MCF 10A (cell line): ENCODE measurements at regions of chr1 and their contacts with region 1.

Region 1: DNA sequence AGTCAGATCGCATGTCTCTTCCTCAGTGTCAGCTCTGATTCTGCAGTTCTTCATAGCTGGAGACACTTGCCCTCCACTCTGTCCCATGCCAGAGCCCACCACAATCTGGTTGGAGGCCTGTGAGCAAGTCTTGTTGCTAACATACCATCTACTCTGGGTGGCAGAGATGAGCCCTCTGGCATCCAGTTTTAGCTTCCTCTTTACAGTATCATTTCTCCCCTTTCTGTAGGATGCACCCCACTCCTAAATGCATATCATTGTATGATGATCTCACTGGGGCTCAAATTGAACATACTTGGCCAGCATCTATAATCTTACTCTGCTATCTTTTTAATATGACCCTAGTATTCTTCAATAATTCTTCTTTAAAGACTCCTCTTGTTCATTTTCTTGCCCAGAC is 16.9 kb downstream of the PCNX2 start:
- DNase-seq: no peak
- H3K4me3 Mint-ChIP-seq: no peak overlapping the region
- H3K27ac Mint-ChIP-seq: no peak overlapping the region
- H3K4me1 Mint-ChIP-seq: peaks cover 10% of the 10 kb centered on the region
- H3K27me3 Mint-ChIP-seq: no peaks in the 10 kb centered on the region
- CTCF ChIP-seq: no peak

Region 2: DNA sequence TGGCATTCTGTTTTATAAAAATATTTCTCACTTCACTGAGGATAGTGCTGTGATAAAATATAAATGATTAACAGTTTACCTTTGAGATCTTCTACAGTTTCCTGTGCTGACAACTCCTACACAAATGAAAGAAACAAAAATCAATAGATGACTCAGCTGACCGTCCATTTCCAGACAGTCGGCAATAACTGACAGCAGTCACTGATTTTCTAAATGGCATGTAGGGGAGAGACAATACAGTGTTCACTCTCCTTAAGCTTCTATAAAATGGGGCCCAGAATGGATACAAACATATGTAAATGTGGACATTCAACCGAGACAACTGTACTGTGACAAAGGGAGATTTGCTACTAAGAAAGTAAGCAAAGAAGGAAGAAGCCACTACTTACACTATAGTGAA is 17.4 kb before region 1 on chr1:
- CTCF ChIA-PET with region 1: interaction called, 6 read pairs
- POLR2A ChIA-PET with region 1: interaction called, 10 read pairs
- intact Hi-C with region 1: no loop called
- DNase-seq: peak; percentile 38
- H3K4me3 Mint-ChIP-seq: no peak overlapping the region
- H3K27ac Mint-ChIP-seq: peak overlapping the region; percentile 49
- H3K4me1 Mint-ChIP-seq: peaks cover 8% of the 10 kb centered on the region
- H3K27me3 Mint-ChIP-seq: no peaks in the 10 kb centered on the region
- CTCF ChIP-seq: no peak

Region 3: DNA sequence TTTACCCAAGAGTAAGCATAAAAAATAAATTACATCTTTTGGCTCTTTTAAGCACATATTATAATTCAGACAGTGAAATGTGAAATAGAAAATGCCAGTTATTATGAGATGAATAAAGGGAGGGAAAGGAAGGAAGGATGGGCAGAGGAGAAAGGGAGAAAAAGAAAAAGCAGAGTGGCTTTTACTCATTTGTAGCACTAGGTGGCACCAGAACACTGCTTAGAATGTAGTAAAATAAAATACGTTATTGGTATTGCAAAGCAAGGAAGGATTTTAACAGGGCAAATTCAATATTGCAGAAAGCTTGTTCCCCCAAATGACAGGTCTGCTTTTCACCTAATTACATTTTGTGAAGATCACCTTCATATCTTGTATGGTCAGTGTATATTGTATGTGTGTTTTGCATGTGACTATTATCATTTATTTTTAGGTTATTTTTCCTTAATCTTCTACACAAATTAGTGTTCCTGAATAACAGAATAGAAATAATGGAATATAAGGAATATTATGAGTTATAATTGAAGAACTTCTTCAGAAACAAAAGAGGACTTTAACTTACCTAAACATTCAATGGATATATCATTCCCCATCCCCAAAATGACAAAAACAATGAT is 26.0 kb after region 1 on chr1:
- CTCF ChIA-PET with region 1: no interaction called
- POLR2A ChIA-PET with region 1: no interaction called
- intact Hi-C with region 1: no loop called
- DNase-seq: peak; percentile 63
- H3K4me3 Mint-ChIP-seq: no peak overlapping the region
- H3K27ac Mint-ChIP-seq: no peak overlapping the region
- H3K4me1 Mint-ChIP-seq: no peaks in the 10 kb centered on the region
- H3K27me3 Mint-ChIP-seq: no peaks in the 10 kb centered on the region
- CTCF ChIP-seq: peak; percentile 98

Region 4: GRCh38 chr1:233607252-233608119 is 328.9 kb after region 1 on chr1:
- CTCF ChIA-PET with region 1: no interaction called
- POLR2A ChIA-PET with region 1: no interaction called
- intact Hi-C with region 1: no loop called
- DNase-seq: peak; percentile 51
- H3K4me3 Mint-ChIP-seq: no peak overlapping the region
- H3K27ac Mint-ChIP-seq: no peak overlapping the region
- H3K4me1 Mint-ChIP-seq: peaks cover 8% of the 10 kb centered on the region
- H3K27me3 Mint-ChIP-seq: peaks cover 12% of the 10 kb centered on the region
- CTCF ChIP-seq: no peak